Activated CD8-positive, alpha-beta T cell treated with anti-CD3 and anti-CD28 coated beads, Interleukin-2, amount 10 ng/mL, durations not matched to agents 7 days and 5 days (primary cell): ENCODE measurements at regions of chr15 and their contacts with region 1.

Region 1: GRCh38 chr15:81323944-81324881 is at the start of gene STARD5:
- DNase-seq: peak; percentile 98
- ATAC-seq: peak; percentile 100
- H3K4me3 Mint-ChIP-seq: peak within 1 kb of the TSS; percentile 100
- H3K27ac Mint-ChIP-seq: peak within 1 kb of the TSS; percentile 94
- H3K4me1 Mint-ChIP-seq: peaks cover 39% of the 10 kb centered on the region
- H3K27me3 Mint-ChIP-seq: no peaks in the 10 kb centered on the region
- total RNA-seq, gene STARD5: 4.9 to 5.3 TPM

Region 2: DNA sequence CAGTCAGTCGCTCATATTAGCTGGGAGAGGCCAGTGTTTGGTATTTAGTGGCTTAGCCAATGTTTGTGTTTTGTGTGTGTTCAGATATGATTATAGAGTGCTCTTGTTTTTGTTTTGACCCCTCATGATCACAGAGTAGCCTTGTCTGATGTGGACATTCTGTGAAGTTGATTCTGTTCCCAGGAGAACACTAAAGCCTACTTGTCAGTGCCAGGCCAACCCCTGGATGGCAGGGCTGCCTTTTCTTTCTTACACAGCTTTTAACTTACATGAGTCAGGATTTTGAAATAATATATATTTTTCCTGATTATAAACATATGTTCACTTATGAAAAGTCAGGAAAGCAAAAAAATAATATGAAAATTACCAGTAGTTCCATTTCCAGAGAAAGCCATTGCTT is 178.2 kb before region 1 on chr15:
- CTCF ChIA-PET with region 1: no interaction called
- POLR2A ChIA-PET with region 1: no interaction called
- DNase-seq: no peak
- ATAC-seq: no peak
- H3K4me3 Mint-ChIP-seq: no peak overlapping the region
- H3K27ac Mint-ChIP-seq: no peak overlapping the region
- H3K4me1 Mint-ChIP-seq: peaks cover 4% of the 10 kb centered on the region
- H3K27me3 Mint-ChIP-seq: peaks cover 12% of the 10 kb centered on the region

Region 3: DNA sequence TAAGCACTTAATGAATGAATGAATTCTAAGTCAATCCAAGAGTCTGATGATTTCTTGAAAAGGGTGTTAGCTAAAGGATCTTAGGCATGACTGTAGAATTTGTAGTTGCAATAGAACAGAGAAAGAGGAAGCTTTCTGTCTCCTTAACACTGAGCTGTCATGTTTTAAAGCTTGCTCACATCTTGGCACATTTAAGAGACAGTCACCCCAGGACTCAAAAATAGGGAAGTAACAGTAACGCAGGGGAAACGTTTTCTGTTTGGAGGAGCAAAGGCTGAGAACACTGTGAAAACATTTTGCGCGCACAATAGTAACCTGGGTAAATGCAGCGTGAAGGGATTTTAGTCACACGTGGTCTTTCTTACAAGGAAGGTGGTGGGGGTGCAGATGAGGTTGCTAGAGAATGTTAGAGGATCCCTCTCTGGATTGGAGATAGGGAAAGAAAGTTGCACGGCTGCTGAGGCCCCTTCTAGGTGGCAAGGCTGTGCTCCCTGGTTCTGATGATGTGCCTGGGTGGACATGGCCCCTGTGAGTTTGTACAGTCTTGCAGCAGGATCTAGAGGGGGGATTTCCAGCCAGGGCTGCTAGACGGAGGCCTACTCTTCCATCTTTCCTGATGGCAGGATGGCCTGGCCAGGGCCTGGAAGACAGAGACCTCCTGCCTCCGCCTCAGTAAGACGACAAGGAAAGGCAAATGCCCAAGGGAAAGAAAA is 12.3 kb before region 1 on chr15:
- CTCF ChIA-PET with region 1: interaction called, 6 read pairs
- POLR2A ChIA-PET with region 1: interaction called, 36 read pairs
- DNase-seq: no peak
- ATAC-seq: no peak
- H3K4me3 Mint-ChIP-seq: no peak overlapping the region
- H3K27ac Mint-ChIP-seq: peak overlapping the region; percentile 54
- H3K4me1 Mint-ChIP-seq: peaks cover 65% of the 10 kb centered on the region
- H3K27me3 Mint-ChIP-seq: no peaks in the 10 kb centered on the region

Region 4: DNA sequence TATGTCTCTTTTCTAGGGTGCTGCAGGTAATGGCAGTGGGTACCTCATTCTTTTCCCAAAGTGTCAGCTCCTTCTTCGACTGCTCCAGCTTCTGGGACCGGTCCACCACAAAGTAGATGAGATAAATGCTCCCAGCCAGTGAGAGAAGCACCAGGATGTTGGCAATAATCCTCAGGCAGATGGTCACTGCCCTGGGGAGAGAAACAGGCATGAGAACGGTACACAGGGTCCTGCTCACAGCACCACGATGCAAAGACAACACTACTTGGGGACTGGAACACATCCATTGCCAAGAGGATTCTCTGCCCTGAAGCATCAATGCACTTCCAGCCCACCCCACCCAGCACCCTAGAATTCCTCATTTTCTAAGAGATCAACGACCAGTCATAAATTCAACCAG is 27.4 kb after region 1 on chr15:
- CTCF ChIA-PET with region 1: no interaction called
- POLR2A ChIA-PET with region 1: no interaction called
- DNase-seq: no peak
- ATAC-seq: no peak
- H3K4me3 Mint-ChIP-seq: no peak overlapping the region
- H3K27ac Mint-ChIP-seq: no peak overlapping the region
- H3K4me1 Mint-ChIP-seq: no peaks in the 10 kb centered on the region
- H3K27me3 Mint-ChIP-seq: no peaks in the 10 kb centered on the region